ENCODE measurements at regions of chr19 and their contacts with region 1.

Region 1: GRCh38 chr19:1767464-1767933 is 14.2 kb downstream of the ONECUT3 start:
- DNase-seq: peak in 5 of 6 donors; percentile 17 to 88 (median 58)
- ATAC-seq: peak; percentile 58 to 93 (median 84)
- H3K4me3 ChIP-seq: no peak overlapping the region
- H3K27ac ChIP-seq: no peak overlapping the region
- H3K4me1 ChIP-seq: no peaks in the 10 kb centered on the region
- H3K27me3 ChIP-seq: peaks cover 0 to 29% (median under 1%) of the 10 kb centered on the region in 4 donors
- CTCF ChIP-seq: peak; percentile 80 to 94 (median 84)

Region 2: DNA sequence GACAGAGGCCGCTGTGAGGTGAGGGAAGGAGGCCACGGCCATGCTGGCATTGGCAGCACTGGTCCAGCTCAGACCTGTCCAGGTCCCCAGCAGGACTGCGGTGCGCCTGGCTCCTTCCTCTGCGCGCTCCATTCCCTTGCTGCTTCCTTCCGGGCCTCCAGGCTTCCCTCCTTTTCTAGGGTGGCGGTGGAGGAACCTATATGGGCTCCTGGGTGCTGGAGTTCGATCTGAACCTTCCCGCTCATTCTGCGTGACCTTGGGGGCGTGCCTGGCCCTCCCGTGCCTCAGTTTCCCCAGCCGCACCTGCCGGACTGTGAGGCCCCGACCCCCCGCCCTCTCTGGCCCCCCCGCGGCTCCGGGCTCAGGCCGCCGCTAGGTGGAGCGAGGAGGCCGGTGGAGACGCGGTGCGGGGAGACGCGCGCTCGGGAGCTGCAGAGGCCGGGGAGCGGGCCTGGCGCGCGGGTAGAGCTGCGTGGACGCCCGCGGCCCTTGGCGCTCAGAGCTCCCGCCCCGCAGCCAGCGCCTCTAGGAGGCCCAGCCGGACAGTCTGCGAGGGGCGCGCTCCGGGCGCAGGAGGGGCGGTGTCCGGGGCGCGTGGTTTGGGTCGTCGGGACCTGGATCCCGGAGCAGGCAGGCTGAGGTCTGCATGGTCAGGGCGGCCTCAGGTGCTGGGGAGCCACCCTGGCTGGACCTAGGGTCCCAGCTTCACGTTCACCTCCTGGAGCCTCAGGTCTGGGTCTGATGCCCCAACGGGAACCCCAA is 451.8 kb before region 1 on chr19:
- intact Hi-C with region 1: no loop called
- DNase-seq: peak; percentile 32 to 84 (median 52)
- ATAC-seq: peak; percentile 70 to 92 (median 89)
- H3K4me3 ChIP-seq: peak overlapping the region in 2 of 4 donors; percentile 16 to 38
- H3K27ac ChIP-seq: no peak overlapping the region
- H3K4me1 ChIP-seq: peaks cover 0 to 4% (median 2%) of the 10 kb centered on the region in 3 donors
- H3K27me3 ChIP-seq: peaks cover 0 to 6% (median 0%) of the 10 kb centered on the region in 4 donors
- CTCF ChIP-seq: peak; percentile 21 to 62 (median 43)

Region 3: GRCh38 chr19:1540365-1540925 is 227.1 kb before region 1 on chr19:
- intact Hi-C with region 1: loop called in 2 of 3 experiments (anchors 10 kb)
- DNase-seq: no peak
- ATAC-seq: no peak
- H3K4me3 ChIP-seq: no peak overlapping the region
- H3K27ac ChIP-seq: no peak overlapping the region
- H3K4me1 ChIP-seq: no peaks in the 10 kb centered on the region
- H3K27me3 ChIP-seq: no peaks in the 10 kb centered on the region
- CTCF ChIP-seq: no peak